AG04450 (cell line): ENCODE measurements at regions of chrX and their contacts with region 1.

Region 1: DNA sequence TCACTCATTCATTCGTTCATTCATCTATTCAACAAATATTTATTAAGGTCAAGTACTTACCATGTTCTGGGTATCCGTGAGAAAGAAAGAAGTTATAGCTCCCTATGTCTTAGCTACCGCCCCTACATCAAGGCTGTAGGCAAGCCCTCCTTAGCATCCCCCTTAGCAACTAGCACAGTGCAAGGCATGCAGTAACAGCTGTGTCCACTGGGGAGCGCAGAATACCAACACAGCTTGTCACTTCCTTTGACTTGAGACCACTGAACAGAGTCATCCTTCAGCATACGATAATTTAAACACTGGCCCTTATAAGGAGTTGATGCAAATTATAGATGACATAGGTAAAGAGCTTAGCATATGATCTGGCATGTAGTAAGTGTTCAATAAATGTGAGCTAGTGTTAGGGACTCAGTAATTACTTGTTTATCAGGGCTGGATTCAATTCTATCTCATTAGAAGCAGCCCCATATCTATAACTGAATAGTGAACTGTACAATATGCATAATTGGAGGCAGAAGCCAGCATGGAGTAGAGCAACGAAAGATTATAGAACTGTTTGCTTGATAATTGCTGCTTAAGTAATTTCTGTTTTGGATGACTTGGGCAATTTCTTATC is 8.7 kb downstream of the KIAA1210 start:
- DNase-seq: no peak
- H3K4me3 ChIP-seq: no peak overlapping the region
- H3K27ac ChIP-seq: no peak overlapping the region
- H3K27me3 ChIP-seq: no peaks in the 10 kb centered on the region
- CTCF ChIP-seq: peak; percentile 75

Region 2: GRCh38 chrX:119130911-119131310 is 12.0 kb after region 1 on chrX:
- CTCF ChIA-PET with region 1: no interaction called
- POLR2A ChIA-PET with region 1: no interaction called
- DNase-seq: no peak
- H3K4me3 ChIP-seq: no peak overlapping the region
- H3K27ac ChIP-seq: no peak overlapping the region
- H3K27me3 ChIP-seq: no peaks in the 10 kb centered on the region
- CTCF ChIP-seq: no peak

Region 3: DNA sequence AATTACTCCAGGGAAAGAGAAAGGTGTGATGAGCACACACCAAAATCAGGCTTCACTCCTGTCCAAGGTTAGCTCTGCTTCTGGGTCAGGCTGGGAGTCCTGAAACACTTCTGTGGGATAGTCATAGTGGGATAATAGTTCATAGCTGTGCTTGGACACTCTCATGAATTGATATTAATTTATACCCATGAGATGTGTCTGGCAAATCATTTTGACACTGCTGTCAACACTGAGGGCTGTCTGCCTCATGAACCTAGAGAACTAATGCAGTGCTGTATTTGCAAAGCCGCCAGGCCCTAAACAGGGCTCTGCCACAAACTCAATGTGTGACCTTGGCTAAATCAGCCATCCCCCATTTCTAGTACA is 92.7 kb after region 1 on chrX:
- CTCF ChIA-PET with region 1: interaction called, 20 read pairs
- POLR2A ChIA-PET with region 1: no interaction called
- DNase-seq: no peak
- H3K4me3 ChIP-seq: no peak overlapping the region
- H3K27ac ChIP-seq: no peak overlapping the region
- H3K27me3 ChIP-seq: no peaks in the 10 kb centered on the region
- CTCF ChIP-seq: no peak

Region 4: DNA sequence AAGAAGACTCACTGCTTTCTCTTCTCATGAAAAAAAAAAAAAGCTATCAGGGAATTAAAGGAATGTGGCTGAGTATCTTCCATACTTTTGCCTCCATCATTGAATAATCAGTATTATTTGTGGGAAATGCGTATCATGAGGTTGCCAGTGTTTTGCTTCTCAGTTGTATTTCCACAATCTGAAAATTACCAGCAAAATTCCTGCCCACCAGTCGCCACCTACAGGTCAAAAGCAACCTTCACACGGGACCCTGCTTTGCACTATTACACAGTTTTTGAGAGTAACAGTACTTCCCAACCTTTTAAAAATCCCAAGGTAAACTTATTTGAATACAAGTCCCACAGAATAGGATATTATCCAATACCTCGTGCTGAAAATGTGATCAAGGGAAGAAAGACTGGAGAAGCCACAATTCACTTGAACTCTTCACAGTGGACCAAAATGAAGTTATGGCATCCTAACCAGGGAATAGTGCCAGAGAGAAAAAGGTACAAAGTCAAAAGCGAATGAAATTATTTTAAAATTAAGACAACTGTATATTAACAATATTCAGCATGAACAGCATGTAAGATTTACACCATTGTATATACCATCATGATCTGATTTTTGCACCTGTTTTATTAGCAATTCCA is 147.6 kb after region 1 on chrX:
- CTCF ChIA-PET with region 1: interaction called, 14 read pairs
- POLR2A ChIA-PET with region 1: no interaction called
- DNase-seq: no peak
- H3K4me3 ChIP-seq: no peak overlapping the region
- H3K27ac ChIP-seq: no peak overlapping the region
- H3K27me3 ChIP-seq: peaks cover 3% of the 10 kb centered on the region
- CTCF ChIP-seq: peak; percentile 72